Endothelial cell of umbilical vein (primary cell): ENCODE measurements at regions of chr4 and their contacts with region 1.

Region 1: DNA sequence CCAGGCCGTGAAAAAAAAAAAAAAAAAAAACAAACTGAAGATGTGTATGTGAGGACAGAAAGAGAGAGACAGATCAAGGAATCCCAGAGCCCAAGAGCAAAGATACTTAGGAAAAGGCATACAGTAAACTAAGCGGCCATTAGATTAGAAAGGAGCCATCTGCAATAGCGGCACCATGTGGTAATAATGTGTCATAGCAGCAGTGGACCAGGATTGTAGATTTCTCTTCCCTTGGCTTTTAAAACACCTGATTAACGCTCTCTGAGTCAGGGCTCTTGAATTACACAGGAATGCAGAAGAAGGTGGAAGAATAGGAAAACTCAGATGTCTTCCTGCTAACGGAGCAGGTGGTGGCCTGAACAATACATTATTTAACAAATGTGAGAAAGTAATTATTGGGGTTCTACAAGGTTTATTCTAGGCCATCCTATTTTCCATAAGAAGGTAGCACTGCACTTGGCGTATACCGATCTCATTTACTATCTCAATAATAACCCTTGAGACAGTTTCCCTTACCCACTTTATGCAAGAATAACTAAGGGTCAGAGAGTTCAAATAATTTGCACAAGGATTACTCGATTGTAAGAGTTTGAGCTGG is 182.7 kb downstream of the KCNIP4 start:
- DNase-seq: peak; percentile 75
- H3K4me3 ChIP-seq: no peak overlapping the region
- H3K27ac ChIP-seq: no peak overlapping the region
- H3K4me1 ChIP-seq: peaks cover 12% of the 10 kb centered on the region
- H3K27me3 ChIP-seq: peaks cover 33 to 50% of the 10 kb centered on the region in 2 experiments
- CTCF ChIP-seq: peak; percentile 74 to 78
- POLR2A ChIP-seq: no peak

Region 2: GRCh38 chr4:20684852-20685763 is 1080.8 kb before region 1 on chr4:
- CTCF ChIA-PET with region 1: no interaction called
- POLR2A ChIA-PET with region 1: no interaction called
- dilution Hi-C with region 1: no loop called
- intact Hi-C with region 1: loop called (anchors 5 kb)
- DNase-seq: peak; percentile 40
- H3K4me3 ChIP-seq: no peak overlapping the region
- H3K27ac ChIP-seq: no peak overlapping the region
- H3K4me1 ChIP-seq: no peaks in the 10 kb centered on the region
- H3K27me3 ChIP-seq: peaks cover 4 to 11% of the 10 kb centered on the region in 2 experiments
- CTCF ChIP-seq: peak; percentile 20 to 22
- POLR2A ChIP-seq: no peak

Region 3: GRCh38 chr4:21012851-21013331 is 753.0 kb before region 1 on chr4:
- CTCF ChIA-PET with region 1: no interaction called
- POLR2A ChIA-PET with region 1: no interaction called
- dilution Hi-C with region 1: no loop called
- intact Hi-C with region 1: loop called (anchors 1 kb)
- DNase-seq: peak; percentile 76
- H3K4me3 ChIP-seq: no peak overlapping the region
- H3K27ac ChIP-seq: peak overlapping the region; percentile 89
- H3K4me1 ChIP-seq: peaks cover 31% of the 10 kb centered on the region
- H3K27me3 ChIP-seq: no peaks in the 10 kb centered on the region
- CTCF ChIP-seq: no peak
- POLR2A ChIP-seq: no peak

Region 4: GRCh38 chr4:21529214-21529613 is 236.7 kb before region 1 on chr4:
- CTCF ChIA-PET with region 1: interaction called, 13 read pairs
- POLR2A ChIA-PET with region 1: no interaction called
- dilution Hi-C with region 1: loop called (anchors 25 kb)
- intact Hi-C with region 1: loop called (anchors 1 kb)
- DNase-seq: peak; percentile 68
- H3K4me3 ChIP-seq: no peak overlapping the region
- H3K27ac ChIP-seq: peak overlapping the region; percentile 37
- H3K4me1 ChIP-seq: peaks cover 14% of the 10 kb centered on the region
- H3K27me3 ChIP-seq: no peaks in the 10 kb centered on the region
- CTCF ChIP-seq: no peak
- POLR2A ChIP-seq: peak; percentile 59

Region 5: DNA sequence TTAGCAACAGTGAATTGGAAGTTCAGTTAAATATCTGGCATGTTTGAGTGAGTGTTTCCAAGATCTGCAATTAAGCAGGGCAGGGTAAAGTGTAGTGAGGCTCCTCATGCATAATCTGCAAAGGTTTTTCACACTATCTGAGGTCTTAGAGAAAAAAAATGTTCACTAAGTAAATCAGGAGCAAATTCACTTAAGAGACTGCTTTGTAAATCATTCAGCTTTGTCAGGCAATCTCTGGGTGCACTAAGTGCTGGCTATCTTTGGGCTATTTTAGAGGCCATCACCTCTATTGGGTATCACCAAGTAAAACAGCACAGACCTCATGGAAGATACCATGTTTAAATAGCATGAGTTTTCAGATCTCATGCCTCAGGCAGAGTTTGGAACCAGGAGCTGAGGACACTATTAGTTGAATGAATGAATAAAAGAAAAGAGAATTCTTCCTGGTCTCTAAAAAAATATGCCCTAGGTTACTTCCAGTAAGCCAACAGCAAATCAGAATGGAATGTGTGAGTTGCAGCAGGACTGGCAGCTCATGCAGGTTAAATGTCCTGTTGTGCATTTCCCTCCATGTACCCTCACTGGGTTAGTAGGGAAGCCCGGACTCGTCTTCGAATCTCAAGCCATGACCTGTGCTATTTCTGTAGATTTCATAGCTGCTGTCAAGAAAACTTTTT is 12.7 kb before region 1 on chr4:
- CTCF ChIA-PET with region 1: interaction called, 13 read pairs
- POLR2A ChIA-PET with region 1: no interaction called
- dilution Hi-C with region 1: no loop called
- intact Hi-C with region 1: no loop called
- DNase-seq: no peak
- H3K4me3 ChIP-seq: no peak overlapping the region
- H3K27ac ChIP-seq: no peak overlapping the region
- H3K4me1 ChIP-seq: no peaks in the 10 kb centered on the region
- H3K27me3 ChIP-seq: peaks cover 5 to 6% of the 10 kb centered on the region in 2 experiments
- CTCF ChIP-seq: no peak
- POLR2A ChIP-seq: no peak

Region 6: DNA sequence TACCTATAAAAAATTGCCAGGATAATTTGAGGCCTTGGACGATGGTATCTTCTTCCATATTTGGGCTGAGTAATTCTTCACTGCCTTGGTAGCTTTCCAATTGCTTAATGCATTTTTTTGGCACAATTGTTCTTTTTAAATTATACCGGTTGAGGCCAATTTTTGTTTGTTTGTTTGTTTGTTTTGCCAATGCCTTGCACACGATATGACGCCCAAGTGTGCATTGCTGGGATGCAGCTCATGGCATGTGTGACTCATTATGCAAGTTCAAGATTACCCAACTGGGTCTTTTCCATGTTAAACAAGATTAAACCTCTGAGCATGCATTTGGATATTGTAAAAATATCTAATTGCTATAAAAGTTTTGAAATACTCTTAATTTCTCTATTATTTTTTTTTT is 253.8 kb after region 1 on chr4:
- CTCF ChIA-PET with region 1: no interaction called
- POLR2A ChIA-PET with region 1: no interaction called
- dilution Hi-C with region 1: no loop called
- intact Hi-C with region 1: no loop called
- DNase-seq: no peak
- H3K4me3 ChIP-seq: no peak overlapping the region
- H3K27ac ChIP-seq: no peak overlapping the region
- H3K4me1 ChIP-seq: no peaks in the 10 kb centered on the region
- H3K27me3 ChIP-seq: no peaks in the 10 kb centered on the region
- CTCF ChIP-seq: no peak
- POLR2A ChIP-seq: no peak